Activated CD4-positive, alpha-beta memory T cell treated with anti-CD3 and anti-CD28 coated beads for 36 hours (primary cell): ENCODE measurements at regions of chr21 and their contacts with region 1.

Region 1: DNA sequence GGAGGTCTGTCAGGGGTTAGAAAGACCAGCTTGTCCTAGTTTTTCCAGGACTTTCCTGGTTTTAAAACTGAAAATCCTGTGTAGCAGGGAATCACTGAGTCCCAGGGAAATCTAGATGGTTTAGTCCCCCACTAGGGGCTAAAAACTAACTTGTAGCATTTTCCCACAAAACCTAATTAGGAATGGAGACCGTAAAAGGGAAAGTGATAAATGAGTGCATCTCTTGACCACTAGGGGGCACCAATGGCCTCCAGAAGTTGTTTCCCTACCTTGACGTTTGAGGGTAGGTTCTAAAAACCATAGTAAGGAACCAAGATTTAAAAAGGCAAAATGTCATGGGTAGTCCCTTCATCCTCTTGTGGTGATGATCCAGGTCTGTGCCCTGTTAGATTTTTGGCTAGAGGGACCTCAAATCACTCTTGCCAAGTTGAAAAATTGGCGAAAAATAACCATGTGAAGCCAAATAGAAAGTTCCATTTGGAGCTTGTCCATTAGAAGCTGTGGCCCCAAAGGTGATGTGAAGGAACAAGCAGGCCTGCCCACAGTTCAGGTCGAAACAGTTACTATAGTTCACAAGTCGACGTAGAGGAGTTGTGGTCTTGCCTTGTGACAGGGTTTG is 24.5 kb downstream of the CLIC6 start:
- DNase-seq: peak; percentile 54
- H3K4me3 Mint-ChIP-seq: no peak overlapping the region
- H3K27ac Mint-ChIP-seq: no peak overlapping the region
- H3K4me1 Mint-ChIP-seq: peaks cover 4% of the 10 kb centered on the region
- H3K27me3 Mint-ChIP-seq: peaks cover 39% of the 10 kb centered on the region

Region 2: DNA sequence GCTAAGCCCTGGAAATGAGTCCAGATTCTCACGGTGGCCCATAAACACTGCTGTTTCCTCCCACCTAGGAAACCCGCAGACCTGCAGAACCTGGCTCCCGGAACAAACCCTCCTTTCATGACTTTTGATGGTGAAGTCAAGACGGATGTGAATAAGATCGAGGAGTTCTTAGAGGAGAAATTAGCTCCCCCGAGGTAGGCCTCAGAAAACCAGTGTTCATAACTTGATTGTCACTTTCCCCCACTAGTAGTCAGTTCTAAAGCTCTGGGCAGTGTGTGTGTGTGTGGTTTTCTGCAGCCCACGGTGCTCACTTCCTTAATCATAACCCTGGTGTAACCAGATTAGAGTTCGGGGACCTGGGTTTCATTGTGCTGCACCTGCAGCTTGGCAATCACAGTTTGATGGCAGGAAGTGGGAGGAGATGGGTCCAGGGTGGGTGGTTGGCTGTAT is 14.6 kb after region 1 on chr21:
- CTCF ChIA-PET with region 1: interaction called, 20 read pairs
- POLR2A ChIA-PET with region 1: no interaction called
- intact Hi-C with region 1: no loop called
- DNase-seq: peak; percentile 85
- H3K4me3 Mint-ChIP-seq: no peak overlapping the region
- H3K27ac Mint-ChIP-seq: peak overlapping the region; percentile 15
- H3K4me1 Mint-ChIP-seq: peaks cover 20% of the 10 kb centered on the region
- H3K27me3 Mint-ChIP-seq: peaks cover 41% of the 10 kb centered on the region

Region 3: DNA sequence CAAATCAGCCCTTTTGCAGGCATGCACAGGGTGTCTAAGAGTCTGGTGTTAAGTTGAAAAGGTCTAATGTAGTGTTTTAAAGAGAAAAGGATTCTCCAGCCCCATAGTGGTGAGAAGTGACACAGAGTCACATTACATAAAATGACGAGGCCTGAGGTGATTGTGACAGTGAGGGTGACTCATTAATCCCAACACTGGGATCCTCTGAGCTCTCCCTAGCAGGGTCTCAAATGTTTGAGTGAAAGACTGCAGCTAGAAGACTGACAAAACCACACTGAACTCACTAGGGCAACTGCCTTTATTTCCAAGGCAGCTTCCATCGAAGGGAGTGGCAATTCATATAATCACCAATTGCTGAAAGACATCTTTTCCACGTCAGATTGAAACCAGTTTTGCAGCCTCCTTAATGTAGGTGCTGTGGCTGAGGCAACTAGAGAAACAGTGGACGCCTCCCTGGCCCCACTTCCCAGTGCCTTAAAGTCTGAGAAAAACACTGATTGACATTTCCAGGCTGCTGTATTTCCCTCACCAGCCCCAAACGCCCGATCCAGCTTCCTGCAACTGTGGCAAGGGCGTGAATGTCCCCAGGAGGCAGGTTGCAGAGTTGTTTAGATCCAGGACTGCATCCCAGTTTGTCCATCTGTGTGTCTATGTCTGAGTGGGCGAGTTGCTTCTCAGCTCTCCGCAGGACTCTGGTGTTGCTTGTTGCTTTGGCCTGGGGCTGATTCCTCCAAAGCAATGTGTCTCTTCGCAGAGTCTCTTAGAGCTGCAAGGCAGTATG is 274.4 kb after region 1 on chr21:
- CTCF ChIA-PET with region 1: no interaction called
- POLR2A ChIA-PET with region 1: no interaction called
- intact Hi-C with region 1: no loop called
- DNase-seq: peak; percentile 75
- H3K4me3 Mint-ChIP-seq: peak overlapping the region; percentile 55
- H3K27ac Mint-ChIP-seq: peak overlapping the region; percentile 95
- H3K4me1 Mint-ChIP-seq: peaks cover 88% of the 10 kb centered on the region
- H3K27me3 Mint-ChIP-seq: no peaks in the 10 kb centered on the region

Region 4: GRCh38 chr21:35400233-35400957 is 707.1 kb after region 1 on chr21:
- CTCF ChIA-PET with region 1: interaction called, 8 read pairs
- POLR2A ChIA-PET with region 1: no interaction called
- intact Hi-C with region 1: loop called (anchors 2 kb)
- DNase-seq: peak; percentile 37
- H3K4me3 Mint-ChIP-seq: no peak overlapping the region
- H3K27ac Mint-ChIP-seq: no peak overlapping the region
- H3K4me1 Mint-ChIP-seq: peaks cover 24% of the 10 kb centered on the region
- H3K27me3 Mint-ChIP-seq: peaks cover 3% of the 10 kb centered on the region

Region 5: GRCh38 chr21:35840197-35840799 is 1147.0 kb after region 1 on chr21:
- CTCF ChIA-PET with region 1: interaction called, 26 read pairs
- POLR2A ChIA-PET with region 1: no interaction called
- intact Hi-C with region 1: loop called (anchors 2 kb)
- DNase-seq: peak; percentile 51
- H3K4me3 Mint-ChIP-seq: no peak overlapping the region
- H3K27ac Mint-ChIP-seq: no peak overlapping the region
- H3K4me1 Mint-ChIP-seq: no peaks in the 10 kb centered on the region
- H3K27me3 Mint-ChIP-seq: peaks cover 1% of the 10 kb centered on the region

Region 6: GRCh38 chr21:36028127-36029069 is 1335.1 kb after region 1 on chr21:
- CTCF ChIA-PET with region 1: interaction called, 17 read pairs
- POLR2A ChIA-PET with region 1: no interaction called
- intact Hi-C with region 1: loop called (anchors 5 kb)
- DNase-seq: peak; percentile 77
- H3K4me3 Mint-ChIP-seq: no peak overlapping the region
- H3K27ac Mint-ChIP-seq: no peak overlapping the region
- H3K4me1 Mint-ChIP-seq: peaks cover 4% of the 10 kb centered on the region
- H3K27me3 Mint-ChIP-seq: no peaks in the 10 kb centered on the region